B cell (primary cell): ENCODE measurements at regions of chr1 and their contacts with region 1.

Region 1: DNA sequence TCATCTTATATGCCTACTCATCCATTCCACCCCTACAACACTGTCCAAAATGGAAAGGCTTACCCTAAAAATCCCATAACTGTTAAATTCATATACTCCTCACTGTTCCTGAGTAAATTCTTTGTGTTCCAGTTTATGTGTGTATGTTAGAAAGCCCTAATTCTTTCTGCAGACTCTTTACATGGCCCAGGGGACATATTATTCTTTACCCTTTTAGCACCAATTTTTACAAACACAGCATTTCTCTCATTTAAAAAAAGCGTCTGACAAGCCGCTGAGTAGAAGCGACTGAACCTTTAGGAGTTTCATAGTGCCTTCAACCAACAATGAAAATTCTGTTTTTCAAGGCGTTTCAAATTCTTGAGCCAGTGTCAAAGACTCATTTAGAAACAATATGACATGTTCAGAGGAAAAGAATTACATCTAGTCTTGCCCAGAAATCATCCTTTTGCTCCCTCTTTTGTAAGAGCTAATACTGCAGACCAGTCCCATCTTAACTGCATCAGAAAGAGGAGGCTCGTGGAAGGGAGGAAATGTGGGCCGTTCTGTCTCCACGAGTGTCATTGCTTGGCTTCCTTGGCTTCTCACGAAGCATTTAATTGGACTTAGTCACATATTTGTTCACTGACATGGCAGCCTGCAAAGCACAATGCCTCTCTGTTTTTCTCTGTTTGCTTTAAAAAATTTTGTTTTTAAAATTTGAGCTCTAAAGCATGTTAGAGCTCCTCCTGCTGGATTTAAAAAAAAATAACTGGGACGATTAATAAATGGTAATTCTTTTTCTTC is 21.3 kb upstream of the C1orf105 start:
- DNase-seq: peak; percentile 74
- ATAC-seq: peak; percentile 50
- H3K4me3 ChIP-seq: peak overlapping the region in 3 of 5 experiments; percentile 33 to 41 (median 36)
- H3K4me3 Mint-ChIP-seq: peak overlapping the region; percentile 78
- H3K27ac ChIP-seq: peak overlapping the region; percentile 47 to 71
- H3K27ac Mint-ChIP-seq: peak overlapping the region; percentile 94
- H3K4me1 ChIP-seq: peaks cover 43 to 48% of the 10 kb centered on the region in 2 donors
- H3K4me1 Mint-ChIP-seq: peaks cover 56% of the 10 kb centered on the region
- H3K27me3 ChIP-seq: no peaks in the 10 kb centered on the region
- H3K27me3 Mint-ChIP-seq: no peaks in the 10 kb centered on the region
- CTCF ChIP-seq: peak; percentile 92

Region 2: DNA sequence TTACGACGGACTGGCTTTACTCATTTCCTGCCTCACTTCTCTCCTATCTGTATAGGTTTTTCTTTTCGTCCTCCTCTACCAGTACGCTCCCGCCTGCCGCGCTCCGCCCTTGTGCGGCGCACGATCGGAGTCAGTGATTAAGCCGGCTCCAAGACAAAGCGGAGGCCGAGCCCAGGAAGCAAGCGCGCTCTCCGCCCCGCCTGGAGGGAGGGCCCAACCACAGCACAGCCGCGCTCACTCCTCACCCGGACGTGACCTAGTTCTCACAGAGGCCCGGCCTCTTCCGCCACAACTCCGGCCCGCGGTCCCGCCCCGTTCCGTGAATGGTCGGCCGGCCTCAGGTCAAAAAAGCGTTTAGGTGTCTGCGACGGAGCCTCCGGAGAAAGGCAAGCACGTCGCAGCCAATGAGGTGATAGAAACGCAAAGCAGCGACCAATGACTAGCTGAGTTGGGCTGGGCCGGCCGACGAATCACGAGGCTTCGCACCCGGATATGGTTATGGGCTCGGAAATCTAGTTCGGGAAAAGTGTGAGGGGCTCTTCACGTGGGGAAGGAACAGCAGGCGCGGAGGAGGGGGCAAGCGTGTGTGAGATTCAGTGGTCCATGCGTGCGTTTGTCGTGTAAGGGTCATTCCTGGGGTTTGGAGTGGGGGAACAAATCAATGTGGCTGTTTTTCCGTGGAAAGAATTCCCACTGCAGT is 617.8 kb before region 1 on chr1 and contains the start of gene METTL13:
- CTCF ChIA-PET with region 1: no interaction called
- POLR2A ChIA-PET with region 1: no interaction called
- intact Hi-C with region 1: loop called (anchors 1 kb)
- DNase-seq: peak; percentile 99
- ATAC-seq: peak; percentile 91
- H3K4me3 ChIP-seq: peak within 1 kb of the TSS; percentile 82 to 100 (median 89)
- H3K4me3 Mint-ChIP-seq: peak within 1 kb of the TSS; percentile 96
- H3K27ac ChIP-seq: peak within 1 kb of the TSS; percentile 71 to 81
- H3K27ac Mint-ChIP-seq: peak within 1 kb of the TSS; percentile 94
- H3K4me1 ChIP-seq: peaks cover 26 to 32% of the 10 kb centered on the region in 2 donors
- H3K4me1 Mint-ChIP-seq: peaks cover 44% of the 10 kb centered on the region
- H3K27me3 ChIP-seq: no peaks in the 10 kb centered on the region
- H3K27me3 Mint-ChIP-seq: peaks cover 8% of the 10 kb centered on the region
- CTCF ChIP-seq: no peak
- total RNA-seq, gene METTL13: 33.0 and 35.4 TPM in 2 replicates

Region 3: GRCh38 chr1:172089768-172090510 is 309.2 kb before region 1 on chr1:
- CTCF ChIA-PET with region 1: interaction called, 152 read pairs
- POLR2A ChIA-PET with region 1: no interaction called
- intact Hi-C with region 1: loop called (anchors 1 kb)
- DNase-seq: peak; percentile 75
- ATAC-seq: peak; percentile 80
- H3K4me3 ChIP-seq: peak overlapping the region in 1 of 5 experiments; percentile 7
- H3K4me3 Mint-ChIP-seq: no peak overlapping the region
- H3K27ac ChIP-seq: no peak overlapping the region
- H3K27ac Mint-ChIP-seq: no peak overlapping the region
- H3K4me1 ChIP-seq: no peaks in the 10 kb centered on the region
- H3K4me1 Mint-ChIP-seq: peaks cover 9% of the 10 kb centered on the region
- H3K27me3 ChIP-seq: no peaks in the 10 kb centered on the region
- H3K27me3 Mint-ChIP-seq: no peaks in the 10 kb centered on the region
- CTCF ChIP-seq: peak; percentile 84

Region 4: DNA sequence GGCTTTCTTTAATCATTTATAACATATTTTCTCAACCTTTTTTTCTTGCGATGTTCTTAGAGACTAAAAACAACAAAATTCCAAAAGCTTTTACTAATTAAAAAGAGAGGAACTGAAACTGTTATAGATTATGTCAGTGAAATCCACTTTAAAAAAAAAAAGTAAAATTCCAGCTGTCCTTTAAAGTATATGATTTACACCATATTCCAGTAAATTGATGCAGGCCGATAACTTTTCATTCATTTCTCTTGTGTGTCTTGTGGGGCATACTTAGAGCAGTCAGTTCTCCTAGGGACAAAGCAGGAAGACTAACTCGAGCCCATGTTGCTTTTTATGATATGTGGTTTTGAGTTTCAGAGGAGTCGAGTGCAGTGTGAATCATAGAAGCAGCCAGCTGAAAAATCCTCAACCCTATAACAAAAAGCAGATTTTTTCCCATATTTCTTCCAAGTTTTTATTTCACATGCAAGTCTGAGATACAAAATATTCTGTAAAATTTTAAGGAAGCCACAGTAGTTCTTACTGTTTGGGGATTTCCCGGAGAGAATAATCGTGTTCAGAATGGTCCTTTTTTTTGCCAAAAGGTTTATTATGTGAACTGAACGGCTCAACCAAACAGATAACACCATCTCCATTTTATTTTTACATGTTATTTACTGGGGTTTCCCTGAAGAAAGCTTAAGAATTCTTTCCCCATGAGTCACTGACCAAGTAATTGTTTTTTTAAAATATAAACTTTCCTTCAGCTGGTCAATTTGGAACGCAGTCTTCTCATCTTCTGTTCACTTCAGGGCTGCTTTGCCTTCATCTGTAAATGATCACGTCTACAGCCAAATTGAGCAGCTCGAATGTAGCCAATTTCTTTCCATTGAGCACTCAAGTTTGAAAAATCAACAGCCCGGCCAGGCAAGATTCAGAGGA is 55.7 kb before region 1 on chr1:
- CTCF ChIA-PET with region 1: interaction called, 15 read pairs
- POLR2A ChIA-PET with region 1: no interaction called
- intact Hi-C with region 1: no loop called
- DNase-seq: peak; percentile 45
- ATAC-seq: peak; percentile 51
- H3K4me3 ChIP-seq: peak overlapping the region in 2 of 5 experiments; percentile 6 to 27
- H3K4me3 Mint-ChIP-seq: peak overlapping the region; percentile 71
- H3K27ac ChIP-seq: peak overlapping the region; percentile 42 to 48
- H3K27ac Mint-ChIP-seq: peak overlapping the region; percentile 79
- H3K4me1 ChIP-seq: peaks cover 34 to 45% of the 10 kb centered on the region in 2 donors
- H3K4me1 Mint-ChIP-seq: peaks cover 60% of the 10 kb centered on the region
- H3K27me3 ChIP-seq: no peaks in the 10 kb centered on the region
- H3K27me3 Mint-ChIP-seq: no peaks in the 10 kb centered on the region
- CTCF ChIP-seq: no peak

Region 5: DNA sequence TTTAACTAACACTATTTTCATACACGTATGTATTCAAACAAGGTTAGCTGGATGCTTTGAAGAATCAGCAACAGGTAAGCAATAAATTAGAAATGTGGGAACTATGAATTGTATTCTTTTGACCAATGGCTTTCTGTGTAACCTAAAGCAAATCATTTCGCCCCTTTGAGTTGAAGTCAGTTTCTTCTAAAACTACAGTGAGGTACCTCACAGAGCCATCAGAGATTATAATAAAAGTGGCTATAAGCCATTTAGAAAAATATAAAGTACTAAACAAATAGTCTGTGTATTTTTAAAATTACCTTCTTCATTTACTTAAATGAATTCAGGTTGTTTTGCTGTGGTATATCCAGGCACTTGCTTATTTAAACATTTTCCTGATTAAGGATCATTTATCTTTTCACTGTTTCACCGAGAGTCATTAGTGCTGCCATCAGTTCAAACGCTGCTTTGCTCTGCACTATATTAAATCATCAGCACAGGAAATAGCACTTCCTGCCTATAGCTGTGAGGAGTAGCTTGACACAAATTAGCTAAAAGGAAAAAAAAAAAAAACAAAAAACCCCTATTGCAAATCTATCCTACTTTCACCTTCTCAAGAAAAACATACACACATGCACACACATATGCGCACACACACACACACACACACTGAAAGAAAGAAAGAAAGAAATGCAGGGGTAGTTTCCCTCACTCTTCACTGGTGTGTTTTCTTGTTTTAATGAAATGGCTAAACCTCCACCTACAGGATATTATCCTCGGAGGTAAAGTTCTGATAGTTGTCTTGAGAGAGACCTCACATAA is 18.5 kb before region 1 on chr1:
- CTCF ChIA-PET with region 1: interaction called, 23 read pairs
- POLR2A ChIA-PET with region 1: interaction called, 3 read pairs
- intact Hi-C with region 1: loop called (anchors 1 kb)
- DNase-seq: peak; percentile 76
- ATAC-seq: peak; percentile 90
- H3K4me3 ChIP-seq: peak overlapping the region in 3 of 5 experiments; percentile 27 to 49 (median 33)
- H3K4me3 Mint-ChIP-seq: peak overlapping the region; percentile 73
- H3K27ac ChIP-seq: peak overlapping the region; percentile 76 to 89
- H3K27ac Mint-ChIP-seq: peak overlapping the region; percentile 90
- H3K4me1 ChIP-seq: peaks cover 26 to 37% of the 10 kb centered on the region in 2 donors
- H3K4me1 Mint-ChIP-seq: peaks cover 44% of the 10 kb centered on the region
- H3K27me3 ChIP-seq: no peaks in the 10 kb centered on the region
- H3K27me3 Mint-ChIP-seq: no peaks in the 10 kb centered on the region
- CTCF ChIP-seq: no peak

Region 6: DNA sequence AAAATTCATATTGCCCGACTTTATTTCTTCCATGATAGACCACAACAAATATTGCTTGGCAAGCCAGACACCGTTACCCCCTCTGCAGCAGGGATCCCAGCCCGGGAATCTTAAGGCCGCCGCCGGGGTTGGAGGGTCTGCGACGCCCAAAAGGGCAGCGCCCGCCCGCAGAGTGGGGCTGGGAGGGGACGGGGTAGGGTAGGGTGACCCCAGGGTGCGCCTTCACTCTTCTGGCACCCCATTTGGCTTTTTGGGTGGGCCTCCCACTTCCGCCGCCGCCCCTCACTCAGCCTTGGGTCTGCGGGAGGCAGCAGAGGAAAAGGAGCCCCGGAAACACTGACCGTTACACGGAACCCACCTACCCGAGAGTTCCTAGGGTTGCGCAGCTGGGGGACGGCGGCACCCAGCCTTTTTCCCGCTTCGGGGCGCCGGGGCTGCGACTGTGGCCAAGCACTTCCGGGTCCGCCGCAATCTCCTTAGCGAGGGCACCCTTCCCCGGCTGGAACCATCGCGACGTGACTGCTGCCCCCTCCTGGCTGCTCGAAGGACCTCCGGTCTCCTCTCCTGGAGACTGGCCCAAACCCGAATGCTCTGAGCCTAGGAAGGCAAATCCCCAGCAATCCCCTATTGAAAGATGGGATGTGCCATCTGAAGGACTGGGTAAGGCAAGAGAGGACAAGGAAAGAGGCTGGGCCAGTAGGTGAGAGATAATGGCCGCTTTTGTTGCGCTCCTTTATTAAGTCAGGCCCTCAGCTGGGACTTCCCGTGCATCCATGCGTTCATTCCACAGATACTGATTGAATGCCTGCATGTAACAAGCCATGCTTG is 44.7 kb after region 1 on chr1 and contains the start of gene PIGC:
- CTCF ChIA-PET with region 1: interaction called, 14 read pairs
- POLR2A ChIA-PET with region 1: no interaction called
- intact Hi-C with region 1: loop called (anchors 1 kb)
- DNase-seq: peak; percentile 92
- ATAC-seq: peak; percentile 100
- H3K4me3 ChIP-seq: peak within 1 kb of the TSS; percentile 68 to 95 (median 93)
- H3K4me3 Mint-ChIP-seq: peak within 1 kb of the TSS; percentile 96
- H3K27ac ChIP-seq: peak within 1 kb of the TSS; percentile 77 to 86
- H3K27ac Mint-ChIP-seq: peak within 1 kb of the TSS; percentile 90
- H3K4me1 ChIP-seq: peaks cover 11 to 16% of the 10 kb centered on the region in 2 donors
- H3K4me1 Mint-ChIP-seq: peaks cover 37% of the 10 kb centered on the region
- H3K27me3 ChIP-seq: no peaks in the 10 kb centered on the region
- H3K27me3 Mint-ChIP-seq: no peaks in the 10 kb centered on the region
- CTCF ChIP-seq: peak; percentile 91
- total RNA-seq, gene PIGC: 28.8 TPM in 2 replicates

Region 7: GRCh38 chr1:172561252-172561651 is 162.1 kb after region 1 on chr1:
- CTCF ChIA-PET with region 1: no interaction called
- POLR2A ChIA-PET with region 1: no interaction called
- intact Hi-C with region 1: no loop called
- DNase-seq: no peak
- ATAC-seq: no peak
- H3K4me3 ChIP-seq: no peak overlapping the region
- H3K4me3 Mint-ChIP-seq: no peak overlapping the region
- H3K27ac ChIP-seq: no peak overlapping the region
- H3K27ac Mint-ChIP-seq: no peak overlapping the region
- H3K4me1 ChIP-seq: no peaks in the 10 kb centered on the region
- H3K4me1 Mint-ChIP-seq: peaks cover 5% of the 10 kb centered on the region
- H3K27me3 ChIP-seq: no peaks in the 10 kb centered on the region
- H3K27me3 Mint-ChIP-seq: no peaks in the 10 kb centered on the region
- CTCF ChIP-seq: no peak

Region 8: DNA sequence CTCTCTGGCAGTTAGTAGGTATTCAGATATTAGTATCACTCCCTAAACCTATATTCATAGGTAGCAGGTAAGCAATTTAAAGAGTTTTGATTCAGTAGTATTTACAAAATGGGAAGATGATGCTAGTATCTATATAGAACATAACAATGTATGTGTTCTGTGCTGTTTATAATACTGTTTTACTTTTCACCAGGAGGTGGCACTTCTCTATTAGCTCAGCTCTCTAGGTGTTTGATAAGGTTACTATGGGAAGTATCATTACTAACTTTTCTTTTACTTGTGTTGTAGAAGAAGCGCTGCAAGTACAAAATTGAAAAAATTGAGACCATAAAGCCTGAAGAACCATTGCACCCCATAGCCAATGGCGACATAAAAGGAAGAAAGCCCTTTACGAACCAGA is 210.4 kb after region 1 on chr1:
- CTCF ChIA-PET with region 1: no interaction called
- POLR2A ChIA-PET with region 1: no interaction called
- intact Hi-C with region 1: no loop called
- DNase-seq: no peak
- ATAC-seq: no peak
- H3K4me3 ChIP-seq: no peak overlapping the region
- H3K4me3 Mint-ChIP-seq: no peak overlapping the region
- H3K27ac ChIP-seq: no peak overlapping the region
- H3K27ac Mint-ChIP-seq: no peak overlapping the region
- H3K4me1 ChIP-seq: no peaks in the 10 kb centered on the region
- H3K4me1 Mint-ChIP-seq: no peaks in the 10 kb centered on the region
- H3K27me3 ChIP-seq: no peaks in the 10 kb centered on the region
- H3K27me3 Mint-ChIP-seq: no peaks in the 10 kb centered on the region
- CTCF ChIP-seq: no peak